CD4-positive, alpha-beta memory T cell (primary cell): ENCODE measurements at regions of chr6 and their contacts with region 1.

Region 1: GRCh38 chr6:163170294-163170883 is 244.1 kb upstream of the QKI start:
- DNase-seq: peak in 3 of 5 donors; percentile 6 to 16 (median 13)
- H3K4me3 ChIP-seq: no peak overlapping the region
- H3K4me3 Mint-ChIP-seq: no peak overlapping the region
- H3K27ac ChIP-seq: no peak overlapping the region
- H3K27ac Mint-ChIP-seq: peak overlapping the region in 1 of 7 donors; percentile 4
- H3K4me1 ChIP-seq: no peaks in the 10 kb centered on the region
- H3K4me1 Mint-ChIP-seq: peaks cover 0 to 2% (median 0%) of the 10 kb centered on the region in 4 donors
- H3K27me3 ChIP-seq: no peaks in the 10 kb centered on the region
- H3K27me3 Mint-ChIP-seq: peaks cover 3 to 7% of the 10 kb centered on the region in 2 donors

Region 2: DNA sequence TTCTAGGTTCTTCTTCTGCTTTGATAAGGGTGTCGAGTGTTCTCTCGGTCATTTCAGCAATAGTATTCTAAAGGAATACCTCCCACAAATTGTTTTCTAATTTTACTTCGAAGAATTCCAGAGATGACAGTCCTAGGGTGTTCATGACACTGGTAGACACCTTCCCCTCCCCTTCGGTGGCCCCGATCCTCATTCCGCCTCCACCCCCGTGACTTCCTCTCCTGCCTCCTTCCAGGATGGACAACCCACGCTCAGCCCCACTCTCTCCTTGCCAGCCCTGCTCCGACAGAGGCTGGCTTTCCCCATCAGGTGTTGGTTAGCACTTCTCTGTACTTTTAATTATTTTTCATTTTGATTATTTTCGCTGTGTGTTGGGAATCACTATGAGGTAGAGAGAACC is 10.7 kb before region 1 on chr6:
- CTCF ChIA-PET with region 1: interaction called, 23 read pairs
- POLR2A ChIA-PET with region 1: no interaction called
- intact Hi-C with region 1: no loop called
- DNase-seq: no peak
- H3K4me3 ChIP-seq: no peak overlapping the region
- H3K4me3 Mint-ChIP-seq: no peak overlapping the region
- H3K27ac ChIP-seq: no peak overlapping the region
- H3K27ac Mint-ChIP-seq: no peak overlapping the region
- H3K4me1 ChIP-seq: no peaks in the 10 kb centered on the region
- H3K4me1 Mint-ChIP-seq: no peaks in the 10 kb centered on the region
- H3K27me3 ChIP-seq: no peaks in the 10 kb centered on the region
- H3K27me3 Mint-ChIP-seq: peaks cover 0 to 4% of the 10 kb centered on the region in 2 donors

Region 3: DNA sequence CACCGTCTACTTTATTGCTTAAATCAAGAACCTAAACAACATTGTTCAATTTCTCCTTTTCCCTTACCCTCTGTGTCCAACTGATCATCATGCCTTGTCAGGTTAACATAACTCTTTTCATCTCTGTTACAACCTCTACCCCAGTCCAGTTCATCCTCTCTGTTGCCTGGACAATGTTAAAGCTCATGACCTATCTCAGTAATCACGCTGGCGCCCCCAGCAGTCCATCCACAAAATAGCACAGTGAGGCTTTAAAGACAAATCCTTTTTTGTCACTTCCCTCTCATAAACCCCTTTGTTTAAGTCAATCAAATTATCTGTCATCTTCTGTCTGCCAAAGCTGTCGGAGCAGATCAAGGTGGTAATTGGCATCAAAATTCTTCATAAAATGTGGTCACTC is 384.3 kb after region 1 on chr6:
- CTCF ChIA-PET with region 1: interaction called, 17 read pairs
- POLR2A ChIA-PET with region 1: no interaction called
- intact Hi-C with region 1: no loop called
- DNase-seq: peak; percentile 37 to 68 (median 44)
- H3K4me3 ChIP-seq: no peak overlapping the region
- H3K4me3 Mint-ChIP-seq: no peak overlapping the region
- H3K27ac ChIP-seq: no peak overlapping the region
- H3K27ac Mint-ChIP-seq: peak overlapping the region in 5 of 7 donors; percentile 4 to 62 (median 40)
- H3K4me1 ChIP-seq: no peaks in the 10 kb centered on the region
- H3K4me1 Mint-ChIP-seq: peaks cover 5 to 15% (median 11%) of the 10 kb centered on the region in 4 donors
- H3K27me3 ChIP-seq: no peaks in the 10 kb centered on the region
- H3K27me3 Mint-ChIP-seq: no peaks in the 10 kb centered on the region

Region 4: DNA sequence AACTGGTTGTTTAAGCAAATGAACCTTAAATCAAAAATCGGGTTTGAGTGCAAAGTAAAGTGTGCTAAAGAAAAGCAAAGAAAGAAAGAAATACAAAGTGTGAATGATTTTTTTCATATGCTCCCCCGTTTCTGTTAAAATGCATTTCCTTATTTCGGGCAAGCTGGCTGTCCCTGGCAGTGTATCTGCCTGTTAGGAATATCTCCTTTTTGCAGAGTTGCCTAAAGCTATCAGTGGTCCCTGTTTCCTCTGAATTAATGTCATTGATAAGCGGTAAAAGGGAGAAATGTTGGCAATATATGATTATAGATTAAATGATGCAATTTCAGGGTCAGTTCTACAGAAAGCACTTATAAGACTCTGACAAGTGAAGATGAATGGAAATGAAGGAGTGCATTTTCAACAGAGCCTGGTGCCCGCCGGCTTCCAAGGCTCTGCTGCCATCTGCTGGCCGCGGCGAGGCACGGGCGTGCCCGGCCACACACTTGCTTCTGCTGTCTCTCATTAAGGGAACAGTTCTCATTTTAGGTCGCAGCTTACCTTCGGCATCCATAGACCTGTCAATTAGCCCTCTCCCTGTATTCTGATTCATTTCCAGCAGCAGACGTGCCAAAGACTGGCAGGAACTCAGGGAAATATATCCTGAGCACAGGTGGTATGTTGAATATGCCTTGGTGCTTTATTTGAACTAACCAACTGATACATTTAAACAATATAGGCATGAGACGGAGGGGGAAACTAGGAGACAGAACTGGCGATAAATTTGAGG is 1757.1 kb after region 1 on chr6:
- CTCF ChIA-PET with region 1: no interaction called
- POLR2A ChIA-PET with region 1: no interaction called
- intact Hi-C with region 1: loop called (anchors 5 kb)
- DNase-seq: peak in 4 of 5 donors; percentile 35 to 54 (median 38)
- H3K4me3 ChIP-seq: no peak overlapping the region
- H3K4me3 Mint-ChIP-seq: no peak overlapping the region
- H3K27ac ChIP-seq: no peak overlapping the region
- H3K27ac Mint-ChIP-seq: no peak overlapping the region
- H3K4me1 ChIP-seq: no peaks in the 10 kb centered on the region
- H3K4me1 Mint-ChIP-seq: no peaks in the 10 kb centered on the region
- H3K27me3 ChIP-seq: no peaks in the 10 kb centered on the region
- H3K27me3 Mint-ChIP-seq: no peaks in the 10 kb centered on the region